ENCODE measurements at regions of chr17 and their contacts with region 1.

Region 1: DNA sequence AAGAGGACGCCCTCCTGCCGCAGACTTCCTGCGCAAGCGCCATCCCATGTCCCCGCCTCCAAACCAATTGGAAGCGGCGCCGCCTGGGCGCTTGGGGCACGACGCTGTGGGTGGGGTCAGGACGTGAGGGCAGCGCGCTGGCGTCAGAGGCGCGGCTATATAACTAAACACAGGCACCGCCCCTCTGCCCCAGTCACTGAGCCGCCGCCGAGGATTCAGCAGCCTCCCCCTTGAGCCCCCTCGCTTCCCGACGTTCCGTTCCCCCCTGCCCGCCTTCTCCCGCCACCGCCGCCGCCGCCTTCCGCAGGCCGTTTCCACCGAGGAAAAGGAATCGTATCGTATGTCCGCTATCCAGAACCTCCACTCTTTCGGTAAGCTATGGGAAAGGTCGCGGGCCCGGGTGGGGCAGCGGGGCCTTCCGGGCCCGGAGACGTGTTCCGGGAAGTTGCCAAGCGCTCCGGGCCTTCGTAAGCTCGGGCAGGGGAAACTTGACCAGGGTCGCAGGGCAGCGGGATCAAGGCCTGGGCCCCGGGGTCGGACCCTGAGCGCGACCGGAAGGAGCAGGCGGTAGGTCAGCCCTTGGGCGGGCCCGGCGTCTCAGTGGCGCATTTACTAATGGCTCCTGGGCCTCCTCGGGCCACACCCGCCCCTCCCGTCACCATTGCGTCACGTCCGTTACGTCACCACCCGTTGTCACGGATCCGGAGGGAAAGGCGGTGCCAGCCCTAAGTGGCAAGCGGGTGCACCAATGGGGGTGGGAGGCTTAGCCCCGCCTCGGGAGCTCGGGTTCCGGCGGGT is at the start of gene EIF1:
- DNase-seq: peak; percentile 99

Region 2: GRCh38 chr17:40818733-40819527 is 870.0 kb before region 1 on chr17:
- CTCF ChIA-PET with region 1: no interaction called
- POLR2A ChIA-PET with region 1: interaction called, 12 read pairs
- DNase-seq: peak; percentile 62

Region 3: DNA sequence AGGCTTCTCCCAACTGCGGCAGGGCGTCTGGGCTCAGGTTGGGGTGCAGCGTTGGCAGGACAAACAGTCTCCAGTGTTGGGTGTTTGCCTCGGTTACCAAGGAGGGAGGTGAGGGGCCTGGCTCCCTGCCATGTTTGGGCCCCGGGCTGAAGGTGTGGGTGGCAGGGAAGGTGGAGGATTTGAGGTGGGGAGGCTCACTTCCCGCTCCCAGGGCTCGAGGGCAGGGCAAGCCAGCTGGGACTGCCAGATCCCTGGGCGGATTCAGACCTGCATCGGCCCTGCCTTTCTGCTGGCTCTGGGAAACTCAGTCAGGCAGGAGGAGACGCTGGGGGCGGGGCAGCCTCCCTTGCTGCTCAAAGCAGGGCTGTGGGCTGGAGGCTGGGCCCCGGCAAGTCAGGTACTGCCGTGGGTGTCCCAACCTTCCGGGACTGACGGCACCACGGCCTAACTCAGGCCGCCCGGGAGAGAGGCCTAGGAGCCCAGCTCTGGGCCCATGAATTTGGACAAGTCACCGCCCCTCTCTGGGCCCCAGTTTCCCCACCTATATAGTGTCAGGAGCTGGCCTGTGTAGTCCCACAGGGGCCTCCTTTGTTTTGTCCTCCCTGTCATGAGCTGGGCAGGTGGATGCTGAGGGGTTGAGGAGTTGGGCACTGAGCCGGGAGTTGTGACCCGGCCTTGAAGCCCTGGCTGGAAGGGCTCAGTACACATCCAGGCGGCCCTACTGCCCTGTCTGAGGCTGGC is 33.1 kb before region 1 on chr17:
- CTCF ChIA-PET with region 1: interaction called, 3 read pairs
- POLR2A ChIA-PET with region 1: interaction called, 18 read pairs
- DNase-seq: no peak

Region 4: DNA sequence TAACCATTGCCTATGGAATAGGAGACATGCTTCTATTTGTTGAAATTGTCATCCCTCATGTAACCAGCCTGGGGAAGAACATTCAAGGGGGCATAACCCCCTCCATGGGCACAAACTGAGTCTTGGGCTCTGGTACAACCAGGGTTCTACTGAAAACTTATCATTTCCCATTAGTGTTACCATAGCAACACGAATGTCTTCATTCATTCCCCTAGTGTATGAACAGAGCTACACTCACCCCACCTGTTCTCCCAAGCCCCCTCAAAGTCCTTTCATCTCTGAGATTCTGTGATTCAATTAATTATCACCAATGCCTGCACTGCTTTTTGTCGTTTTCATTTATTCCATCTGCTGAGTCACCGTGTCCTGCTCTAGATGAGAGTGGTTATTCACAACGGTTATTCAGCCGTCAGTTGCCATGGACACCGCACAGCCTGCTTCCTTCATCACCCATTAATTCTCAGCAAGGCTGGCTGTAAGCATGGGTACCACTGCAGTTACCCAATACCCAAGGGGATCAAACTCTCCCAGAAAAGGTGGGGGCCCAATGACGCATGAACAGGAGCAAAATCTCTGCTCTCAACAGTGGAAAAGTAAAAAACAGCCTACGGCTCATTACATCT is 21.7 kb after region 1 on chr17:
- CTCF ChIA-PET with region 1: interaction called, 7 read pairs
- POLR2A ChIA-PET with region 1: interaction called, 199 read pairs
- DNase-seq: no peak

Region 5: DNA sequence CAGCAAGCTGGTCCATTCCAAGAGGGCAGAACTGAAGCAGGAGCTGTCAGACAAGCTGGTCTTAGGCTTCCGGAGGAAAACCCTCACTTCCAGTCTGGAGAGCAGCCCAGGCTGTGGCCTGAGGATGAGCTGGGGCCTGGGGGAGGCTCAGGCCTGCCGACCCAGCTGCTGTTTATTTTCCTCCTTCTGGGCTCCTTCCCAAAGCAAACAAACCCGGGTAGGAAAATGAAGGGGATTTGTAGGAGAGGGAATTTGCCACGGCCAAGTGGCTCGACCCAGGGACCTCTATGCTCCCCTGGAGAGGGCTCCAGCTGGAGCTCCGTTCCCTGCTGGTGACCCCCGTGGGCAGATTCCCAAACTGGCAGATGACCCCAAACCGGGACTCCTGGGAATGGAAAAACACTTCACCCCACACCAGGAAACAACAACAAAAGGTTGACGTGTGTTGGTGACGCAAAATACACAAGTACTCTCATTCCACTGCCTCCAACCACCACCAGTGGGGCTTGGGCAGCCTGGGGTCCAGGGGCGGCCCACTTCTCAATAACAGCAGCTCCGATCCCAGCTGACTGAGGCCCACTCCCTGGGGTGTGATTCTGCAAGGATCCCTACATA is 88.8 kb after region 1 on chr17:
- CTCF ChIA-PET with region 1: no interaction called
- POLR2A ChIA-PET with region 1: interaction called, 19 read pairs
- DNase-seq: peak; percentile 42

Region 6: GRCh38 chr17:41811549-41812380 is 122.9 kb after region 1 on chr17 and contains the start of gene P3H4:
- CTCF ChIA-PET with region 1: interaction called, 3 read pairs
- POLR2A ChIA-PET with region 1: interaction called, 33 read pairs
- DNase-seq: peak; percentile 84

Region 7: DNA sequence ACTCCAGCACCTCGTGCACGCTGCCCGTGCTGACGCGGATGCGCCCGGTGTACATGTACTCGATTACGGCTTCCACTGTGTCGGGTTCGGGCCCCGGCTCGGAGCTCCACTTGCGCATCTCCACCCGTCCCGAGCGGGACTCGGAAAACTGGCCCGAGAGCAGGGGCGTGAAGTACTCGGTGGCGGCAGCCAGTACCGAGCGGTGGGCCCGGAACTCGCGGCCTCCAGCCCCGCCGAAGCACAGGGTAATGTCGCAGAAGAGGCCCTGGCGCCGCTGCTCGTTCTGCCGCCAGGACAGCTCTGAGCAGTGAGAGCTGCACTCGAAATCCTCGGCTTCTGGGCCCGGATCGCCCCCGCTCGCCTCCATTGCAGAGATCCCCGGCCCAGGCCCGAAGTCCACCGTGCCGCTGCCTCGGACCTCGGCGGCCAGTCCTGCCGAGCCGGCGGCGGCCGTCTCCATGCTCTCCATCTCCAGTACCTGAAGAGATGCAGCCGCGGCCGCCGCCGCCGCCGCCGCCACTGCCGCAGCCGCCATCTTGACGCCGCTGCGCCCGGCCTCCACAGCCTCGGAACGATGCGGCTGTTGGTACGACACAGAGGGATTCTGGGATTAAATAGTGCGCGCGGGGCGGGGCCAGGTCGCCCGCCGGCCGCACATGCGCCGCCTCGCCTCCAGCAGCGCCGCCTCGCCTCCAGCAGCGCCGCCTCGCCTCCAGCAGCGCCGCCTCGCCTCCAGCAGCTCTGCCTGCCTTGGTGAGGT is 176.1 kb after region 1 on chr17 and contains the start of gene KLHL11:
- CTCF ChIA-PET with region 1: no interaction called
- POLR2A ChIA-PET with region 1: interaction called, 16 read pairs
- DNase-seq: peak; percentile 96